GM10248 (cell line): ENCODE measurements at regions of chr2 and their contacts with region 1.

Region 1: DNA sequence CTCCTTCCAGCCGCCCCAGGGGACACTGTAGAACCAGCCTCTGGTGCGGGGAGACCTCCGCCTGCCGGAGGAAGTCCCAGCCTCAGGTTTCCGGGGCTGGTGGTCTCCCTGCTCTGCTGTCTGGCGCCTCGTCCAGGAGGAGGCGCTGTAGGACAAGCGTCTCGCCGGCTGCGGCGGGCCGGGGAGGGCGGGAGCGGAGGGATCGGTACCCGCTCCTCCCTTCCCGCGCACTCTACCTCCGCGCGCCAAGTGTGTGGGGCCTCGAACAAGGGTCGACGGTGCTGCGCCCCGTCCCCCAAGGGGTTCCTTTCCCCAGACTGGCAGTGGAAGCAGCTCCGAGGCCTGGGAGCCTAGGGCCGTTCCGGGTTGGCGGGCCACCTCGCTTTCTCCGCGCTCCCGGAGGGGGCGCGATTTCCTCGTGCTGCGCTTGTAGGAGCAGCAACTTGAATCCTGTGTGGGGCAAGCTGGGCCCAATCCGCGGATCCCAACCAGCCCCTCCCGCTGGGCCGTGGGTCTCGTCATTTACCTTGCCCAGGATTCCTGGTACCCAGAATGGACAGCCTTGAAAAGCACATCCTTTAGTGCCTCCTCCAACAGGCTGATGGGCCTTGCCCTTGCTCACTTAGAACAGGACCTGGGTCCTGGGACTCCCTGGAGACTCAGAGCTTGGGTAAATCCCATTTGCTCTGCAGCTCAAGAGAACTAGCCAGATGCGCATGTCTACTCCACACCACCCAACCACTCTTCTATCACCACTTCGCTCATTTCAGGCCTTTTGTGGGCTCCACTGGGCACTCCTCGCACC is 10.6 kb upstream of the HOXD4 start:
- DNase-seq: peak; percentile 92
- CTCF ChIP-seq: peak; percentile 95

Region 2: GRCh38 chr2:176024083-176024482 is 116.6 kb before region 1 on chr2:
- CTCF ChIA-PET with region 1: no interaction called
- POLR2A ChIA-PET with region 1: no interaction called
- DNase-seq: no peak
- CTCF ChIP-seq: no peak

Region 3: DNA sequence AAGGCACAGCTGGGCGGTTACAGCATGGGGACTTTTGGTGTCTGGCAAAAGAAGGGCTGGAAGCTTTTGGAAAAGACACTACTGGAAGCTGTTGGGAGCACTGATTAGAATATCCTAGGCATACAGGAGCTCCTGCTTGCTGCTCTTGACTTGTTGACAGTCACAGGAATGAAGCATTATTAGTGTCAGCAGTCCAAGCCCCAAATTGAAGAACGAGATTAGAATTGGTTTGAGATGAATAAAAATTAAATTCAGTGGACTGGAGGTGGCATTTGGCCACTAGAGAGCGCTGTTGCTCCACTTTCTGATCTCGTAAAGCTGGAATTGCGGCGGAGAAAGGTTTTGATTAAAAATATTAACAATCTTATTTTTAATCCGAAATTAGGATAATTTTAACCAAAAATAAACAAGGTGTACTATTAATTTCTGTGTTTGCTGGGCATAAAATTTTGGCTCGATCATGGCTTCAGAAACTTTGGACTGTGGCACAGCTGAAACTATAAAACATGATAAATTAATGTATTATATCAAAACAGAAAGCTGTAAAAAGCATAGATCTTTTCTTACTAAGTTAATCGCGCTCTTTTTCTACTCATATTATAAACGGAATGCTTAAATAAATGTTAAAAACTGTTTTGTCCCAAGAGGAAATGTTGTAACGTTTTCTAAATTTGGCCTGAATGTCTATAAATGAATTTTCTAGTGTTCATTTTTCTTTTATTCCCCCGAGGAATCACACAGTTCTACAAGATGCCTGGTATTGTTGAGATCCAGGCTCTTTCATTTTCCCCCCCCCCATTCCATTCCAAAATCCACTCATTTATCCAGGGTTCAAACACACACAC is 13.6 kb before region 1 on chr2:
- CTCF ChIA-PET with region 1: interaction called, 18 read pairs
- POLR2A ChIA-PET with region 1: no interaction called
- DNase-seq: peak; percentile 50
- CTCF ChIP-seq: peak; percentile 79

Region 4: GRCh38 chr2:176161819-176162626 is 21.3 kb after region 1 on chr2:
- CTCF ChIA-PET with region 1: interaction called, 19 read pairs
- POLR2A ChIA-PET with region 1: no interaction called
- DNase-seq: no peak
- CTCF ChIP-seq: no peak

Region 5: DNA sequence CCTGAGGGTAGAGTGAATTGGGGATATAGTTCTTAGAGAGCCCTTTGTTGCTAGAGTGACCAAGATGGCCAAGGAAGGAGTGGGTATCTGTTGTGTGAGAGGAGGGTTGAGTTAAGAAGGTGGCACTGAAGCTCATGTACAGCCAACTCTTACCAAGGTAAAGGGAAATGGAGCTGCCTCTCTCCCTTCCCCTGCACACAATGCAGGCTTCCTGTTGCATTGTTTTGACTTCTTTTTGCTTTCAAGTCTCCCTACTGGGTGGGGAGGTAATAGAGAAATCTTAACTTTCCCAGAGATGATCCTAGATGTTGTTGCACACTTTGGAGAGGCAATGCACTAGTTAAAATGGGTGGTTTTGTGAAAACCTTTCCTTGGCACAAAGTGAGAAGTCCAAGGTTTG is 71.6 kb after region 1 on chr2:
- CTCF ChIA-PET with region 1: no interaction called
- POLR2A ChIA-PET with region 1: no interaction called
- DNase-seq: no peak
- CTCF ChIP-seq: no peak

Region 6: GRCh38 chr2:176314897-176315296 is 174.2 kb after region 1 on chr2:
- CTCF ChIA-PET with region 1: no interaction called
- POLR2A ChIA-PET with region 1: no interaction called
- DNase-seq: no peak
- CTCF ChIP-seq: no peak

Region 7: DNA sequence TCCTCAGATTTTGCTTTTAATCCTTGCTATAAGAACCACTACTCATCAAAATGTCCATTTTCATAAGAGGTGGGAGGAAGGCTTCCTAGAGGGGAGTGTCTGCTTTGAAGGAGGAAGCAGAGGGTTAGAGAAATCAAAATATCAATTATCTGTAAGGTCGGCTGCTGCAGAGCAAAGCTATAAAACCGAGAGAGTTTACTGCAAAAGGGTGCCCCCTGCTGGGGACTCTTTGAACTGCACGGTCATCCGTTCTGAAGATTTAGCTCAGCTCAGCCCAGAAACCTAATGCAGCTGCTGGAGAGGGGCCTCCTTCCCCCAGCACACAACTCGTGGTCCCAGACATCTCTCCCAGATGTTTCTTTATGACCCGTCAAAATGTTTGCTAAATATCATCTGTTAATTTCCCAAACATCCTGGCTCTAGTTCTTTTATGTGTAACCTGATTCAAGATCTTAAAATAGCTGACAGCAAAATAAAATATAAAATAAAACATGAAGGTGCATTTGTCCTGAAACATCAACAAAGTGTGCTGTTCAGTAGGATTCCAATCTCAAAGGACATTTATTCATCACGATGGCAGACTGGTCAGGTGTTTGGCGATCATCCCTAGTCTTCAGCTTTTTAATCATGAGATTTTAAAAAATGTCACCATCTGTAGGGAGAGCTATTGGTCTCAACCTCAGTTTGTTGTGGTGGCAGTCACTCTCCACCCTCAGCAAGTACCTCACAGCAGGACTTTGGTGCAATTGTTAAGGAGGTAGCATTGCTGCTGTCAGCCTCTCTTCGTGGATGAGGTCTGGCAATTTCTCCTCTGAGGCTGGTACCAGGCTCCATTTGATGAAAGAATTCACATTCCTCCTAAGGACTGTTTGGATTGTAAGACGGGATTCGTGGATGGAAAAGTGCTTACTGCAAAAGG is 314.4 kb after region 1 on chr2:
- CTCF ChIA-PET with region 1: interaction called, 124 read pairs
- POLR2A ChIA-PET with region 1: no interaction called
- DNase-seq: peak; percentile 55
- CTCF ChIP-seq: peak; percentile 84

Region 8: GRCh38 chr2:176638167-176639015 is 497.7 kb after region 1 on chr2:
- CTCF ChIA-PET with region 1: interaction called, 37 read pairs
- POLR2A ChIA-PET with region 1: no interaction called
- DNase-seq: peak; percentile 83
- CTCF ChIP-seq: peak; percentile 89

Region 9: GRCh38 chr2:177148477-177149154 is 1007.9 kb after region 1 on chr2:
- CTCF ChIA-PET with region 1: interaction called, 16 read pairs
- POLR2A ChIA-PET with region 1: no interaction called
- DNase-seq: peak; percentile 57
- CTCF ChIP-seq: peak; percentile 93